CD8-positive, alpha-beta T cell (primary cell): ENCODE measurements at regions of chr20 and their contacts with region 1.

Region 1: DNA sequence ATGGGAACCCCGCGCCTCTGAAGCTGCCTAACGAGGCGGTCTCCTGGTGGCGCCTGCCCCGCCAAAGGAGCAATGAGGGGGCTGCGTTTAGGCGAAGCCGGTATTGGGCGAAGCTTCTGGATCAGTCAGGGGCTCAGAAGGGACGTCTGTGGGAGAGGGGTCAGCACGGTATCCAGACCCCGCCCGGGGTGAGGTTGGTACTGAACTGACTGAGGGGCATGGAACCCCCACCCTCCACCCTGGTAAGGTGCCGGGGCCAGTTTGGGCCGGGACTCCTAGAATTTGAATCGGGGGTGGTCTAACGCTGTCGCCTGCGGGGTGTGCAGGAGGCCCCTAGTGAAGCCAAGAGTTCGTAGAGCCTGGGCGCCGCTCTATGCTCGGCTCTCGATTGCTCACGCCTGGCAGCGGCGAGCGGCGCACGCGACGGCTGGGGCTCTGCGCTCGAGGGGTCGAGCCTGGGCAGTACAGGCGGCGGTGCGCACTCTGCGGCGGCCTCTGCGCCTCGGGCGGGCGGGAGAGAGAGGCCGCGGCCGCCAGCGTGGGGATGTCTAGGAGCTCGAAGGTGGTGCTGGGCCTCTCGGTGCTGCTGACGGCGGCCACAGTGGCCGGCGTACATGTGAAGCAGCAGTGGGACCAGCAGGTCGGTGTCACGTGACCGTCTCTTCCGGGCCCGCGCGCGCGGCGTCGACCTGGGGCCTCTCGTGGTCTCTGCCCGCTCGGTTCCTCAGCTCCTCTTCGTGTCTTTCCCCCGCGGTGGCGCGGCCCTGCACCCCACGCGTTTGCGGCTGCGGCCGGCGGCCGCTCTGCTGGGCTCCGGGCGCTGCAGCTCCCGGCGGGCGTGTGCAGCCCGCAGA is at the starts of genes KAT14 and PET117:
- DNase-seq: peak; percentile 84 to 97 (median 90)
- ATAC-seq: peak; percentile 91
- H3K4me3 ChIP-seq: peak within 1 kb of the TSS; percentile 89 to 98
- H3K4me3 Mint-ChIP-seq: peak within 1 kb of the TSS; percentile 88
- H3K27ac ChIP-seq: peak within 1 kb of the TSS; percentile 84 to 91
- H3K27ac Mint-ChIP-seq: peak within 1 kb of the TSS; percentile 91
- H3K4me1 ChIP-seq: peaks cover 19% of the 10 kb centered on the region
- H3K4me1 Mint-ChIP-seq: peaks cover 36% of the 10 kb centered on the region
- H3K27me3 ChIP-seq: no peaks in the 10 kb centered on the region
- H3K27me3 Mint-ChIP-seq: no peaks in the 10 kb centered on the region
- CTCF ChIP-seq: no peak
- total RNA-seq, gene KAT14: 7.8 to 8.4 TPM
- total RNA-seq, gene PET117: 15.3 to 17.3 TPM

Region 2: GRCh38 chr20:17504898-17505635 is 632.6 kb before region 1 on chr20:
- CTCF ChIA-PET with region 1: no interaction called
- POLR2A ChIA-PET with region 1: no interaction called
- intact Hi-C with region 1: loop called (anchors 5 to 10 kb)
- DNase-seq: peak; percentile 13 to 84 (median 48)
- ATAC-seq: peak; percentile 72
- H3K4me3 ChIP-seq: peak overlapping the region; percentile 56 to 61
- H3K4me3 Mint-ChIP-seq: peak overlapping the region; percentile 89
- H3K27ac ChIP-seq: peak overlapping the region in 1 of 2 experiments; percentile 64
- H3K27ac Mint-ChIP-seq: peak overlapping the region; percentile 89
- H3K4me1 ChIP-seq: peaks cover 24% of the 10 kb centered on the region
- H3K4me1 Mint-ChIP-seq: peaks cover 36% of the 10 kb centered on the region
- H3K27me3 ChIP-seq: no peaks in the 10 kb centered on the region
- H3K27me3 Mint-ChIP-seq: no peaks in the 10 kb centered on the region
- CTCF ChIP-seq: peak; percentile 84

Region 3: GRCh38 chr20:18237682-18238081 is 100.0 kb after region 1 on chr20:
- CTCF ChIA-PET with region 1: no interaction called
- POLR2A ChIA-PET with region 1: no interaction called
- intact Hi-C with region 1: no loop called
- DNase-seq: no peak
- ATAC-seq: no peak
- H3K4me3 ChIP-seq: no peak overlapping the region
- H3K4me3 Mint-ChIP-seq: no peak overlapping the region
- H3K27ac ChIP-seq: no peak overlapping the region
- H3K27ac Mint-ChIP-seq: no peak overlapping the region
- H3K4me1 ChIP-seq: no peaks in the 10 kb centered on the region
- H3K4me1 Mint-ChIP-seq: no peaks in the 10 kb centered on the region
- H3K27me3 ChIP-seq: no peaks in the 10 kb centered on the region
- H3K27me3 Mint-ChIP-seq: peaks cover 30% of the 10 kb centered on the region
- CTCF ChIP-seq: no peak

Region 4: DNA sequence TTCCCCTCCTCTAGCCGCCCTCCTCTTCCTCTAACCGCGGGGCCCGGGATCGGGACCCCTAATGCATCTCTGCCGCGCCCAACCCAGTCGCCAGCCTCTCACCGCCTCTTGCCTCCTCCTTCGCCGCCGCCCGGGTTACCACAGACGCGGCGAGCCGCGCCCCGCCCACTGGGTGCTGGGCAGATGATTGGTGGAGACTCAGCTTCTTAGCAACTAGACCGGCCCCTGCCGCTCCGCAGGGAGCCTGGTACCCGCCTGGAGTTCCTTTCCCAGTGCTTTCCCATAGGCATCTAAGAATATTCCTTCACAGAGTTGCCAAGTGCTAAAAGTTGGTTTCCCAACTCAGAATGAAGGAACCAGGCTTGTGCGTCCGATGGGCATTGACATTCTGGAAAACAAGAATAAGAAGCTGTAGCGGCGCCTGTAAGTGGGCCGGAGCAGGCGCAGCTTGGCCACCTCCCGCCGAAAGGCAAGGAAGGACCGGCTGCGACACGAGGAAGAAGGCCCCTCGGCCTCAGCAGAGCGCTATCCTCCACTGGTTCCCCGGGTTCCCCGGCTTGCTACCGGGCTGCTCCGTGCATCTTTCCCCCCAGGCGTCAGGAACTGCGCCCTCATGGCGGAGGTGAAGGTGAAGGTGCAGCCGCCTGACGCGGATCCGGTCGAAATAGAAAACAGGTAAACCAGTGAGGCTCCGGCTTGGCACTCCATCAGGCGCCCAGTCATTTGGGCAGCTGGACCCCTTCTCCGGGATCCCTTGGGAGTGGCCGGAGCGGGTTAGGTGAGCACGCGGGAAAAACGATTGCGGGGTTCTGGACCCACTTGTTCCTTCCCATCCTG is 329.5 kb after region 1 on chr20 and contains the starts of genes DZANK1 and POLR3F:
- CTCF ChIA-PET with region 1: no interaction called
- POLR2A ChIA-PET with region 1: no interaction called
- intact Hi-C with region 1: loop called in 1 of 2 experiments (anchors 2 kb)
- DNase-seq: peak; percentile 84 to 95 (median 93)
- ATAC-seq: peak; percentile 90
- H3K4me3 ChIP-seq: peak within 1 kb of the TSS; percentile 79 to 93
- H3K4me3 Mint-ChIP-seq: peak within 1 kb of the TSS; percentile 97
- H3K27ac ChIP-seq: peak within 1 kb of the TSS; percentile 73 to 92
- H3K27ac Mint-ChIP-seq: peak within 1 kb of the TSS; percentile 97
- H3K4me1 ChIP-seq: peaks cover 16% of the 10 kb centered on the region
- H3K4me1 Mint-ChIP-seq: peaks cover 24% of the 10 kb centered on the region
- H3K27me3 ChIP-seq: no peaks in the 10 kb centered on the region
- H3K27me3 Mint-ChIP-seq: no peaks in the 10 kb centered on the region
- CTCF ChIP-seq: no peak
- total RNA-seq, gene DZANK1: 2.0 to 2.3 TPM
- total RNA-seq, gene POLR3F: 11.5 TPM

Region 5: GRCh38 chr20:18507218-18508021 is 369.8 kb after region 1 on chr20 and contains the start of gene SEC23B:
- CTCF ChIA-PET with region 1: no interaction called
- POLR2A ChIA-PET with region 1: interaction called, 3 read pairs
- intact Hi-C with region 1: loop called in 1 of 2 experiments (anchors 10 kb)
- DNase-seq: peak; percentile 96 to 100 (median 98)
- ATAC-seq: peak; percentile 82
- H3K4me3 ChIP-seq: peak within 1 kb of the TSS; percentile 63 to 87
- H3K4me3 Mint-ChIP-seq: peak within 1 kb of the TSS; percentile 100
- H3K27ac ChIP-seq: peak within 1 kb of the TSS; percentile 97 to 100
- H3K27ac Mint-ChIP-seq: peak within 1 kb of the TSS; percentile 100
- H3K4me1 ChIP-seq: peaks cover 17% of the 10 kb centered on the region
- H3K4me1 Mint-ChIP-seq: peaks cover 47% of the 10 kb centered on the region
- H3K27me3 ChIP-seq: no peaks in the 10 kb centered on the region
- H3K27me3 Mint-ChIP-seq: no peaks in the 10 kb centered on the region
- CTCF ChIP-seq: no peak
- total RNA-seq, gene SEC23B: 31.5 to 31.8 TPM

Region 6: DNA sequence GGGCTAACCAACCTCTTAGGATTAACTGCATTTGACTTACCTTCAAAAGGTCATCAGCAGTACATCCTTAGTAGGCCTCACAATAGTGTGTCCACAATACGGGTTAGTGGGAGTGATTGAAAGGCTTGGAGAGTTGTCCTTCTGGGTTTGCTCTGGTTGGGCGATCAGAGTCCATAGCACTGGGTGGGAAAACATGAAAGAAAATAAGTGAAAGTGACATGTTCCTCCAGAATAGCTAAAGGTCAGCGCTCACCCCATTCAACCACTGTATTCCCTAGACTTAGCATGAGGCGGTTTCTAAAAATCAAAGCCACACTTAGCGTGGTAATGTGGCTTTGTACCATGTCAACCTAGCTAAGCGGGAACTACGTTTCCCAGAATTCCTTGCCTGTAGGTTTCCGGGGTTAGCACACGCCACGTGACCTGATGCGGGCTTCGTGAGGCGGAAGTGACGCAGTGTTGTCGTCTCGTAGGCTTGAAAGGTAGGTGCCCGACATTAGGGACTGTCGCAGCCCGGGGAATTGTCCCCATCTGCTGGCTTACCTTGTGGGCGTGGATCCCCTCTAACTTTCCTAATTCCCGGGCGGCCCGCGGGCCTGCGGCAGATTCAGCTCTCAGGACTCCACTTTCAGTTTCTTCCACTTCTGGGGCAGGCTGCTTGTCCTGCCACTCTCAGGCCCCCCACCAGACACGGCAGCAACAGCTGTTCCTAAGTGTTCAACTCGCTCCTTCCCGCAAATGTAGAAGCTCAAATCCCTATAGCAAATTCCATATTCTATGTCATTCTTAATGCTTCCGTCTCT is 656.2 kb after region 1 on chr20:
- CTCF ChIA-PET with region 1: no interaction called
- POLR2A ChIA-PET with region 1: interaction called, 3 read pairs
- intact Hi-C with region 1: loop called (anchors 1 to 5 kb)
- DNase-seq: peak; percentile 78 to 98 (median 88)
- ATAC-seq: peak; percentile 93
- H3K4me3 ChIP-seq: peak overlapping the region; percentile 73 to 79
- H3K4me3 Mint-ChIP-seq: peak overlapping the region; percentile 96
- H3K27ac ChIP-seq: peak overlapping the region; percentile 94 to 95
- H3K27ac Mint-ChIP-seq: peak overlapping the region; percentile 100
- H3K4me1 ChIP-seq: peaks cover 12% of the 10 kb centered on the region
- H3K4me1 Mint-ChIP-seq: peaks cover 17% of the 10 kb centered on the region
- H3K27me3 ChIP-seq: no peaks in the 10 kb centered on the region
- H3K27me3 Mint-ChIP-seq: peaks cover 19% of the 10 kb centered on the region
- CTCF ChIP-seq: no peak

Region 7: GRCh38 chr20:20052074-20052970 is 1914.7 kb after region 1 on chr20 and contains the starts of genes CFAP61 and CRNKL1:
- CTCF ChIA-PET with region 1: no interaction called
- POLR2A ChIA-PET with region 1: no interaction called
- intact Hi-C with region 1: loop called (anchors 5 kb)
- DNase-seq: peak; percentile 93 to 99 (median 98)
- ATAC-seq: peak; percentile 94
- H3K4me3 ChIP-seq: peak within 1 kb of the TSS; percentile 86 to 96
- H3K4me3 Mint-ChIP-seq: peak within 1 kb of the TSS; percentile 99
- H3K27ac ChIP-seq: peak within 1 kb of the TSS; percentile 86 to 92
- H3K27ac Mint-ChIP-seq: peak within 1 kb of the TSS; percentile 98
- H3K4me1 ChIP-seq: peaks cover 12% of the 10 kb centered on the region
- H3K4me1 Mint-ChIP-seq: peaks cover 29% of the 10 kb centered on the region
- H3K27me3 ChIP-seq: no peaks in the 10 kb centered on the region
- H3K27me3 Mint-ChIP-seq: peaks cover 10% of the 10 kb centered on the region
- CTCF ChIP-seq: no peak
- total RNA-seq, gene CFAP61: not detected
- total RNA-seq, gene CRNKL1: 34.1 to 39.7 TPM